HEK293 (cell line): ENCODE measurements at regions of chr7 and their contacts with region 1.

Region 1: GRCh38 chr7:35906191-35906908 is 105.5 kb downstream of the SEPTIN7 start:
- H3K4me3 ChIP-seq: no peak overlapping the region
- H3K27ac ChIP-seq: no peak overlapping the region
- H3K4me1 ChIP-seq: no peaks in the 10 kb centered on the region
- CTCF ChIP-seq: peak; percentile 61; the same call in 1 of the 2 replicates

Region 2: DNA sequence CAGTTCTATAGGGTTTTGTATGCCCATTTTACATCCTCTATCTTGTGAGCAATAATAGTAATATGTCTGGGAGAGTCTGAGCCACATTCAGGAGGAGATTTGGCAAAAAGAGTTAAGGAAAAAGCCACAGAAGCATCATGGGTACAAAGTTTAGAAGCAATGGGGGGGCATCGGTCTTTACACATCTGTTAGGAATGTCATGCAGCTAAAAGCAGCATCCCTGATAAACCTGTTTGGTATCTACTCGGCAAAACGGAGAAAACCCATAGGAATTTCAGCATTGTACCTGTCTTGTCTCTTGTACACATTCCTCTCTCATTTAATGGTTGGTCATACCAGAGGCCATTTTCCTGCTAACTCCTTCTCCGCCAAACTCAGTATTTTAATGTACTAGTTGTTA is 198.9 kb before region 1 on chr7:
- CTCF ChIA-PET with region 1: interaction called, 41 read pairs
- POLR2A ChIA-PET with region 1: no interaction called
- H3K4me3 ChIP-seq: no peak overlapping the region
- H3K27ac ChIP-seq: no peak overlapping the region
- H3K4me1 ChIP-seq: no peaks in the 10 kb centered on the region
- CTCF ChIP-seq: no peak

Region 3: DNA sequence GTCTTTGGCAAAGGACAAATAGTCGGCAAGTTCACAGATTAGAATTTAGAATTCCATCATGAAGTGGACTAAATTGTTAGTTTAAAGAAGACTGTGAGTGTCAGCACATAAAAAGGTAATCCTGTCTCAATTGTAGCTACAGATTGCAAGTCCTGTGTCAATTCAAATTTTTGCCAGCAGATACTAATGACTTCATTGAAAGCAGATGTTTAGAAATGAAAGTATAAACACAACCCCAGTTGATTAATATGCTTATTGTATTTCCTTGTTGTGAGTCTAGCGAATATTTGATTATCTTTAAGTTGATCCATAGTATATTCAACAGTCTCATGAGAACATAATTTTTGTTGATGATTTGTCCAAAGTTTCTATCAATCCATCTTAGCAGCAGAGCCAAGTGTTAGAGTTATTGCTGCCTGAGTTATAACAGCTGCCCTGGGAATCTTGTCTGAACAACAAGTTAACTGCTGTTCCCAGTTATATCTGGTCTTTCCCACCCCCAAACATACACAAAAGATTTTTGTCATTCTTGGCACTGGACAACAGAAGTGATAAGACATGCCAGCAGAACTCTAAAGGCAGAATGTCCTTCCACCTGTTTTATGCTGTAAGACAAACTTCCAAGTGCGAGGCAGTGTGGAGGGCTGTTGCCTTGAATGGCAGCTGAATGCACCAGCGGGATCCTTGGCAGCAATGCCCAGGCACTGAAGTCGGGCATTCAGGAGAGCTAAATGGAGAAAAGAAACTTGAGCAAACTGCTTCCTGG is 190.1 kb before region 1 on chr7:
- CTCF ChIA-PET with region 1: interaction called, 41 read pairs
- POLR2A ChIA-PET with region 1: no interaction called
- H3K4me3 ChIP-seq: no peak overlapping the region
- H3K27ac ChIP-seq: no peak overlapping the region
- H3K4me1 ChIP-seq: peaks cover 12% of the 10 kb centered on the region
- CTCF ChIP-seq: no peak

Region 4: GRCh38 chr7:35820858-35821257 is 85.5 kb before region 1 on chr7:
- CTCF ChIA-PET with region 1: interaction called, 10 read pairs
- POLR2A ChIA-PET with region 1: no interaction called
- H3K4me3 ChIP-seq: no peak overlapping the region
- H3K27ac ChIP-seq: no peak overlapping the region
- H3K4me1 ChIP-seq: peaks cover 5% of the 10 kb centered on the region
- CTCF ChIP-seq: no peak

Region 5: GRCh38 chr7:36047091-36047658 is 140.8 kb after region 1 on chr7:
- CTCF ChIA-PET with region 1: no interaction called
- POLR2A ChIA-PET with region 1: no interaction called
- H3K4me3 ChIP-seq: no peak overlapping the region
- H3K27ac ChIP-seq: no peak overlapping the region
- H3K4me1 ChIP-seq: peaks cover 10% of the 10 kb centered on the region
- CTCF ChIP-seq: no peak

Region 6: DNA sequence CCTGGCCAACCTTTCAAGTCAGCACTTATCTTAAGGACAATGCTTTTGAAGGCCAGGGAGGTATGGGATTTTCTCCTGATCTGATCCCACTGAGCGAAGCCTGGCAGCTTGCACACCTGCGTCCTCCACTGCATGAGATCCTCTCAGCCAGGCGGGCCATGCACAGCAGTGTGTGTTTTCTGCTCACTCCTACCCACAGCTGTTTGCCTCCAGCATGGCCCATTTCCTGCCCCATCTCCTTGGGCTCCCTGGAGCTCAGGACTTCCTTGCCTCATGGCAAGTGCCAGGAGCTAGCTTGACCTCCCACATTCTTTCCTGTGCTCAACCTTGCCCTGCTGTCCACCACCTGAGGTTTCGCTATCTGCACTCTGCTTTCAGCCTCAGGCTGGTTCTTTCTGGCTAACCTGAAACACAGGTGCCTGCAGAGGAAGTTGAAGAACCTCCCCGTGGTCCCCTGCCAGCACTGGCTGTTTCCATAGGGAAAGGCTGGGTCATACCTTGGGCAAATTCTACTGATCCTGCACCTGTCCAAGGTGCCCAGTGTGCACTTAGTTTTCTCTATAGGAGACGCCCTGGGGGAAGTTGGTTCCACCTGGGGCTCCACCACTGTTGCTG is 202.8 kb after region 1 on chr7:
- CTCF ChIA-PET with region 1: no interaction called
- POLR2A ChIA-PET with region 1: no interaction called
- H3K4me3 ChIP-seq: no peak overlapping the region
- H3K27ac ChIP-seq: no peak overlapping the region
- H3K4me1 ChIP-seq: no peaks in the 10 kb centered on the region
- CTCF ChIP-seq: no peak